ENCODE measurements at regions of chr1 and their contacts with region 1.

Region 1: DNA sequence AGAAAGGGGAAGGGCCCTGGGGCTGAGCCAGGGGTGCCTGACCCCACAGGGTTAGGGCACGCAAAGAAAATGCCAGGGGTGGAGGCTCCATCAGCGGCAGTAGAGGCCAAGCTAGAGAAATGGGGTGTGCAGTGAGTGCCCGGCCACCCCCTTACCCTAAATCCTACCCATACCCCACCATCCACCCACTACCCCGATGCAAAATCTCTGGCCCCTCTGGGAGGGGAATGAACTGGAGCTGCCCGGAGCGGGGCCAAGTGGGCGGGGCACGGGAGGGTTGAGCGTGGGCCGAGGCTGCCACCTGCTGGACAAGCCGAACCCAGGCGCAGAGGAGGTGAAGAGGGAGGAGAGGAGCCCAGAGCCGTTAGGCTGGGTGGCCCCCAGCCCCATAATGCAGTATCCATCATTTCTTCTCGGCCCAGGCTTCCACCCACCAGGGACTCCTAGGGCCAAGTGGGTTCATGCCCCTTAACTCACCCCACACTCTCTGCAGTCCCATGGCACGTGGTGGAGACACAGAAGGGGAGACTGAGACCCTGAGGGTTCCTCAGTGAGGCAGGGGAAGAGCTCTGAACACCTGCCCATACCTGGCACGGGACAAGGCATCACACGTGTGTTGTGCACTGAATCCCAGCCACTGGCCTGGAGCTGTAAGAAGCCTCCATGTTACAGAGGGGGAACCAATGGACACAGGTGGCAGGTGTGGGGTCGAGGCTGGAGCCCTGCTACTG is 1.4 kb upstream of the C1QC start:
- DNase-seq: peak; percentile 86
- H3K4me3 ChIP-seq: no peak overlapping the region
- H3K27ac ChIP-seq: peak overlapping the region; percentile 33
- H3K4me1 ChIP-seq: peaks cover 4% of the 10 kb centered on the region
- H3K27me3 ChIP-seq: peaks cover 65% of the 10 kb centered on the region
- CTCF ChIP-seq: peak; percentile 92

Region 2: DNA sequence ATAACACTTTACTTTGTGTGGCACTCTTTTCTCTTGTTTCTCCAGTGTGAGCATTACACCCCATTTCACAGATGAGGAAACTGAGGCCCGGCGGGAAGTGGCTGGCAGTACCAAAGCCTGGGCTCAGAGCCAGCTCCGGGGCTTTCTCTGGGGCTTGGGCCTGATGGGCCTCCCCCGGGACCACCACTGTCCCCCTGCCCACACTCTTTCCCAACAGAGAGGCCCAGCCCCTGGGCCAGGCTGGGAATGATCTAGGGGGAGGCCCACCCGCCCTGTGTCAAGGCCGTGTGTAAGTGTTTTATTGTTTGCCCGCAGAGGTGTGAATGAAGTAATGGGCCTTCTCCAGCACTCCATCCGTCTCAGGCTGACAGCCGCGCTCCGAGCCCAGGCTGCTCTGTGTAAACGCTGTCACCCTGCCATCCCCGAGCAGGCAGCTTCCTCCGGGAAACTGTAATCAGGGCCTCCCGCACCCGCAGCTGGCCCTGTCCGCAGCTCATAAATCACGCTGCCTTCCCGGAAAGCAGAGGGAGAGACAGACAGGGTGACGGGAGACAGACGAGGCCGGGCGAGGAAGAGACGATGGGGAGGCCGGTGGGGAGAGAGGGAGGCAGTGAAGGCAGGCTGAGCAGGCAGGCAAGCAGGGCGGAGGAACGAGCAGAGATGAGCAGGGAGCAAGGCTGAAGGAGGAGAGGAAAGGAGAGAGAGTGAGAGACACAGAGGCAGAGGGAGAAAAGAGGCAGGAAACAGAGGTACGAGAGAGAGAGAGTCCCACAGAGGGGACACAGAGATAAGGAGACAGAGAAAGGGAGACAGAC is 300.1 kb before region 1 on chr1:
- intact Hi-C with region 1: no loop called
- DNase-seq: no peak
- H3K4me3 ChIP-seq: no peak overlapping the region
- H3K27ac ChIP-seq: no peak overlapping the region
- H3K4me1 ChIP-seq: peaks cover 5% of the 10 kb centered on the region
- H3K27me3 ChIP-seq: peaks cover 91% of the 10 kb centered on the region
- CTCF ChIP-seq: no peak

Region 3: DNA sequence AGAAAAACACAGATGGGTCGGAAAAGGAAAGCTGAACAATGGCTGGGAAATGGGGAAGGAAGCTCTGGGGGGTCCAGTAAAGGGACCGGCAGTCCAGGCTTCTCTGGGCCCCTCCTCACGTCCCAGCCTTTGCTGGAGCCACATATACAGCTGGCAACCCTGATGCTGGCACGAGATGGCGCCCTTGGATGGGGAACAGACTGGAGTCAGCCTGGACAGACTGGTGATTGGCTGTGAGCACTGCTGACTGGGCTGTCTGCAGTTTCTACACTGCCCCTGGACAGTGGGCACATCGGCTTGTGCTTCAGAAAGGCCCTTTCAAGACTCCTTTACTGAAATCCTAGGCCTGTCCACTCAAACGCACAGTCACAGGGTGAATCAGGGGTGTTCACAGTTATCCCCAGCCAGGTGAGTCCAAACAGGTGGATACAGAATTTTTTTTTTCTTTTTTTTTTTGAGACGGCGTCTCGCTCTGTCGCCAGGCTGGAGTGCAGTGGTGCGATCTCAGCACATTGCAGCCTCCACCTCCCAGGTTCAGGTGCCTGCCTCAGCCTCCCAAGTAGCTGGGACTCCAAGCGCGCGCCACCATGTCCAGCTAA is 221.5 kb before region 1 on chr1:
- intact Hi-C with region 1: loop called (anchors 5 kb)
- DNase-seq: peak; percentile 80
- H3K4me3 ChIP-seq: no peak overlapping the region
- H3K27ac ChIP-seq: no peak overlapping the region
- H3K4me1 ChIP-seq: peaks cover 28% of the 10 kb centered on the region
- H3K27me3 ChIP-seq: peaks cover 50% of the 10 kb centered on the region
- CTCF ChIP-seq: peak; percentile 79

Region 4: DNA sequence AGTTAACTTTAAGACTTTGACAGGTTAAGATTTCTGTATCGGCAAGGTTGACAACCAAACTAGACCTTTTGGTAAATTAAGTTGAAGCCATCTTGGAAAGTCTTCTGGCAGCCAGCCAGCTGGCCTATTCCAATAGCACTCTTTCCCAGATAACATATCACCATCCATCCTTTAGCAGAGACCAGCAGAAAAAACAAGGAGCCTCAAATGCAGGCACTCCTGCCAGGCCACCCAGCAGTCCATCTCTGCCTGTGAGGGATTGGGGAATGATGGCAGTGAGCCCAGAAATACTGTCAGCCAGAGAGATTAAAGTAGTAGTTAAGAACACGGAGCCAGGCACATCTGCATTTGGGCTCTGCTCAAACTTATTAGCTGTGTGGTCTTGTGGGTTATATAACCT is 171.0 kb before region 1 on chr1:
- intact Hi-C with region 1: no loop called
- DNase-seq: peak; percentile 43
- H3K4me3 ChIP-seq: no peak overlapping the region
- H3K27ac ChIP-seq: peak overlapping the region; percentile 45
- H3K4me1 ChIP-seq: peaks cover 61% of the 10 kb centered on the region
- H3K27me3 ChIP-seq: no peaks in the 10 kb centered on the region
- CTCF ChIP-seq: no peak

Region 5: DNA sequence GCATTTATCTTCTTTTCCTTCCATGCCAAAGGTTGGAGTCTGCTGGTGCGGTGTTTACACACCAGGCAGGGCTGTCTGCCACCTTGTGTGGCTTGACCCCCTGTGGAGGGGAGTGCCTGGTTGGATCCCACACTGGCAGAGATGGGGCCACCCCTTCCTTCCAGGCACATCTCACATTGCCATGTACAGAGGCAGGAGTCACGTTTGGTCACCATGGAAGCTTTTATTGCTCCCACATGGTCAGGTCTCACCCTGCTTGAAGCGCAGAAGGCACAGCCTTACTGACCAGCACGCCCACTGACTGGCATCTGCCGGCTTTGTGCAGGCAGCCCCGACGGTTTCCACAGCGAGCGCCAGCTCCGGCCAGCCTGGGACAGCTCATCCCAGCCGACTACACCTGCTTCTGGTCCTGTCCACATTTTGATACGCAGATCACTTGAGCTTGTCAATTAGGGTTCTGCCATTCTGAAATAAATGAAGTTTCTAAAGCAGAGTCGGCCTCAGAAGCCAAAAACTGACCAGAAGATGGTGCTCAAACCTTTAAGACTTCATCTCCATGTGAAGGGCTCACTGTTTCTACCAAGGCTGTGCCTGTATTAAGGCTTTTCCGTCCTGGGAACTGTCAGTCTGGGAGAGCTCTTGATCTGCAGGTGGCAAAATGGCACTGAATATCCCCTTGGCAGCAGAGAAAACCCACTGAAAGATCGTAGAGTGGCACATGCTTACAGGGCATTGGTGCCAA is 114.3 kb before region 1 on chr1:
- intact Hi-C with region 1: no loop called
- DNase-seq: no peak
- H3K4me3 ChIP-seq: no peak overlapping the region
- H3K27ac ChIP-seq: no peak overlapping the region
- H3K4me1 ChIP-seq: peaks cover 25% of the 10 kb centered on the region
- H3K27me3 ChIP-seq: no peaks in the 10 kb centered on the region
- CTCF ChIP-seq: peak; percentile 15

Region 6: DNA sequence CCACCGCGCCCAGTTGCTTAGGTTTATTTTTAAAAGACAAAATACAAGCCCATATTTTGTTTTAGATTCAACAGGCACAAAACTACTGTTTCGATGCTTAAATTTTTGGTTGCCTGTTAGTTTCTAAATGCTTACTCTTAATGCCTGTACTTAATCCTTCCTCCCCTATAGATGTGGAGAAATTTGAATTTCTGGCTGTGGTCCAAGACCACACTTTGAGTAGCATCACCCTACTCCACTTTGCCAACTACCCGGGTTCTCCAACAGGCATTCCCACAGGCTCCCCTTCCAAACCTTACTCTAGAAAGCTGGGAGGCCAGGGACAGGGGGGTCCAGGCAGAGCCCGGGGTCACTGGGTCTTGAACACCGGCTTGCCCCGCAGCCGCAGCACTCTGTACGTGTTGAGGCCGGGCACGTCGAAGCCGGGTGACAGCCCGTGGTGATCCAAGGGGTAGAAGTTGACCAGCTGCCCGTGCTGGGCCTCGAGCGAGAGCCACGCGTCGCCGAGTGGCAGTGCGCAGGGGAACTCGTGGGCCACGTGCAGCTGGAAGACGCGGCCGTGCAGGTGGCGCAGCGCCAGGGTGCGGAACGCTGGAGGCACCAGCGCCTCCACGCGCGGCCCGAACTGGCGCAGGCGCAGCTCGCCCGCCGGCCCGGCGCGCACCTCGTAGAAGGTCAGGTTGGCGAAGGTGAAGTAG is 310.8 kb after region 1 on chr1:
- intact Hi-C with region 1: no loop called
- DNase-seq: no peak
- H3K4me3 ChIP-seq: peak overlapping the region; percentile 43
- H3K27ac ChIP-seq: no peak overlapping the region
- H3K4me1 ChIP-seq: no peaks in the 10 kb centered on the region
- H3K27me3 ChIP-seq: peaks cover 85% of the 10 kb centered on the region
- CTCF ChIP-seq: no peak

Measured in left ventricle myocardium inferior (tissue), 1 donor.